Naive thymus-derived CD4-positive, alpha-beta T cell (primary cell): ENCODE measurements at regions of chr1 and their contacts with region 1.

Region 1: DNA sequence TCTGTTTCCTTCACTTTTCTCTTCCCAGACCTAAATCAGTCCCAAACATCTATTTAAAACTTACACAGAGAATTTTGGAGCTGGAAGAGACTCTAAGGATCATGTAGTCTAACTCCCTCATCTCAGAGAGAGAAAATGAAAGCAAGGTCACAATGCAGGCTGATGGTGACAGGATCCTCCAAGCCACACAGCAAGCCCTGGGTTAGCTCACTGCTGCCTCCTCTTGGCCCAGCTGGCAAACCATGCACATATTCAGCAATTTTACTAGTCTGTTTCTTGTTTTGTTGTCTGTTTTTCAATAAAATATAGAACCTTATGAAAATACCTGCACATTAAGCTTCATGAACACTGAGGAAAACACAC is 27.7 kb upstream of the LY9 start:
- DNase-seq: peak; percentile 66 to 89 (median 82)
- ATAC-seq: peak; percentile 98
- H3K4me3 ChIP-seq: peak overlapping the region; percentile 48
- H3K4me3 Mint-ChIP-seq: peak overlapping the region; percentile 61 to 94 (median 82)
- H3K27ac ChIP-seq: peak overlapping the region; percentile 56
- H3K27ac Mint-ChIP-seq: peak overlapping the region; percentile 89 to 99 (median 96)
- H3K4me1 ChIP-seq: peaks cover 16% of the 10 kb centered on the region in 2 donors
- H3K4me1 Mint-ChIP-seq: peaks cover 19 to 29% (median 21%) of the 10 kb centered on the region in 7 donors
- H3K27me3 ChIP-seq: no peaks in the 10 kb centered on the region
- H3K27me3 Mint-ChIP-seq: no peaks in the 10 kb centered on the region

Region 2: GRCh38 chr1:160097911-160098851 is 670.1 kb before region 1 on chr1 and contains the start of gene IGSF8:
- CTCF ChIA-PET with region 1: no interaction called
- POLR2A ChIA-PET with region 1: no interaction called
- intact Hi-C with region 1: no loop called
- DNase-seq: peak; percentile 84 to 92 (median 92)
- ATAC-seq: peak; percentile 82
- H3K4me3 ChIP-seq: peak within 1 kb of the TSS; percentile 87
- H3K4me3 Mint-ChIP-seq: peak within 1 kb of the TSS; percentile 86 to 96 (median 94)
- H3K27ac ChIP-seq: peak within 1 kb of the TSS; percentile 96
- H3K27ac Mint-ChIP-seq: peak within 1 kb of the TSS; percentile 88 to 99 (median 97)
- H3K4me1 ChIP-seq: peaks cover 28 to 56% of the 10 kb centered on the region in 2 donors
- H3K4me1 Mint-ChIP-seq: peaks cover 40 to 87% (median 63%) of the 10 kb centered on the region in 7 donors
- H3K27me3 ChIP-seq: no peaks in the 10 kb centered on the region
- H3K27me3 Mint-ChIP-seq: no peaks in the 10 kb centered on the region
- total RNA-seq, gene IGSF8: 31.9 to 68.7 (median 44.8) TPM

Region 3: GRCh38 chr1:160618763-160619274 is 149.5 kb before region 1 on chr1:
- CTCF ChIA-PET with region 1: interaction called, 15 read pairs
- POLR2A ChIA-PET with region 1: interaction called, 4 read pairs
- intact Hi-C with region 1: loop called (anchors 1 to 2 kb)
- DNase-seq: peak in 6 of 9 donors; percentile 34 to 49 (median 46)
- ATAC-seq: peak; percentile 83
- H3K4me3 ChIP-seq: no peak overlapping the region
- H3K4me3 Mint-ChIP-seq: peak overlapping the region in 3 of 10 donors; percentile 2 to 46 (median 24)
- H3K27ac ChIP-seq: no peak overlapping the region
- H3K27ac Mint-ChIP-seq: peak overlapping the region; percentile 21 to 83 (median 69)
- H3K4me1 ChIP-seq: peaks cover 23% of the 10 kb centered on the region in 2 donors
- H3K4me1 Mint-ChIP-seq: peaks cover 32 to 84% (median 68%) of the 10 kb centered on the region in 7 donors
- H3K27me3 ChIP-seq: no peaks in the 10 kb centered on the region
- H3K27me3 Mint-ChIP-seq: no peaks in the 10 kb centered on the region

Region 4: DNA sequence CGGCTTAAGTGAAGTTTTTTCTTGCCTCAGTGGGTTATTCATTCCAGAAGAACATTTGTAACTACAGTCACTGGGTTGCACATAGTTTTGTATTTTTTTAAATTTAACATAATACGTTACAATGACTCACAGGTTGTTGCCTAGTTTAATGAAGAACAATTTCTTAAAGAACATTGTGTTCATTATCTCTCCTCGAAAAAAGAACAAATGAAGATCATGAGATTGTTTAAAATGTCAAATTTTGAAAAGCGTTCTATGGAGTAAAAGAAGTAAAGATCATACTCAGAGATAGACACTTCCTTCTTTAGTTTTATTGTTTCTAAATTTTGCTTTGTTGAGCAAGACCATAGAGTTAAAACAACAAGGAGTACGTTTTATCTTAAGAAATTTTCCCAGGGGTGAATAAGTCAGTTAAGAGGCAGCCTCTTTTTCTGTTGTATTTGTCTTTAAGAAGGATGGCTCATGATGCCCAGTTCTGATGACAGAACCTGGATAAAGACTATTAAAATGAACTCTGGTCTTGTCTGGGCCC is 111.0 kb before region 1 on chr1:
- CTCF ChIA-PET with region 1: no interaction called
- POLR2A ChIA-PET with region 1: no interaction called
- intact Hi-C with region 1: no loop called
- DNase-seq: peak in 1 of 9 donors; percentile 29
- ATAC-seq: peak; percentile 29
- H3K4me3 ChIP-seq: no peak overlapping the region
- H3K4me3 Mint-ChIP-seq: peak overlapping the region in 9 of 10 donors; percentile 4 to 61 (median 55)
- H3K27ac ChIP-seq: peak overlapping the region; percentile 44
- H3K27ac Mint-ChIP-seq: peak overlapping the region; percentile 7 to 89 (median 83)
- H3K4me1 ChIP-seq: peaks cover under 1 to 60% of the 10 kb centered on the region in 2 donors
- H3K4me1 Mint-ChIP-seq: peaks cover 39 to 96% (median 84%) of the 10 kb centered on the region in 7 donors
- H3K27me3 ChIP-seq: no peaks in the 10 kb centered on the region
- H3K27me3 Mint-ChIP-seq: no peaks in the 10 kb centered on the region

Region 5: DNA sequence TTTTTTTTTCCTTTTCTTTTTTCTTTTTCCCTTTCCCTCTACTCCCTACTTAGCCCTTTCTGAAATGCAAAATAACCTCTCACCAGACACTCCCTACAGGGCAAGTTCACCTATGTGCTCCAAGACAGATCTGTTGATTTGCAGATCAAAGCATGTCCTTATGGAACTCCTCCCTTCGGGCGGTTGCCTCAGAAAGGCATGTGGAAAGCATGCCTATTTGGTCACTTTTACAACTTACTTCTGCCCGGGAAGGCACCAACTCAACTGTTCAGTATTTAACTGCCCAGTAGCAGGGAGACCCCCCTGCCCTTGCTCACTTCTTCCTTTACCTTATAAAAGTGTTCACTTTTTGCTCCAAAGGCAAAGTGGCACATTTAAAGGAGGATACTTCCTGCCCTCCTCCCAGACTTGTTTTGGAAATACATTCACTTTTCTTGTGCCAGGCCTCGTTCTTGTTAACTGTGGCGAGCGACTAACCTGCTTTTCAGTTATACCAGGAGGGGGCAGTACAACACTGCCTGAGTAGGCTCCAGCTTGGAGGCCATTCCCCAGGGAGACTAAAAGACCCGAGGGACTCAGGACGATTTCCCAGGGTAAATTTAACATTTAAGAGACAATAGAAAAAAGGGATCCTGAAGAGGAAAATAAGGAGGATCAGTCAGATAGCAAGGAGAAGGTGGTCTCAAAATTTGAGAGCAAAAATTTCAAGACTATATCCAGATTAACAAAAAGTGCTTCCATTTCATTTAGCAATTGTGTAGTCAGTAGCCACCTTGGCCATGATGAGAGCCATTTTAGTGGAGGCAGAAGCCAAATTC is 41.6 kb before region 1 on chr1:
- CTCF ChIA-PET with region 1: interaction called, 85 read pairs
- POLR2A ChIA-PET with region 1: interaction called, 8 read pairs
- intact Hi-C with region 1: loop called (anchors 1 kb)
- DNase-seq: peak in 8 of 9 donors; percentile 57 to 80 (median 73)
- ATAC-seq: peak; percentile 97
- H3K4me3 ChIP-seq: no peak overlapping the region
- H3K4me3 Mint-ChIP-seq: no peak overlapping the region
- H3K27ac ChIP-seq: no peak overlapping the region
- H3K27ac Mint-ChIP-seq: no peak overlapping the region
- H3K4me1 ChIP-seq: peaks cover 15 to 21% of the 10 kb centered on the region in 2 donors
- H3K4me1 Mint-ChIP-seq: peaks cover 12 to 29% (median 16%) of the 10 kb centered on the region in 7 donors
- H3K27me3 ChIP-seq: no peaks in the 10 kb centered on the region
- H3K27me3 Mint-ChIP-seq: no peaks in the 10 kb centered on the region

Region 6: GRCh38 chr1:160830321-160831153 is 62.3 kb after region 1 on chr1:
- CTCF ChIA-PET with region 1: interaction called, 26 read pairs
- POLR2A ChIA-PET with region 1: no interaction called
- intact Hi-C with region 1: no loop called
- DNase-seq: peak; percentile 51 to 77 (median 67)
- ATAC-seq: peak; percentile 75
- H3K4me3 ChIP-seq: no peak overlapping the region
- H3K4me3 Mint-ChIP-seq: no peak overlapping the region
- H3K27ac ChIP-seq: peak overlapping the region; percentile 10
- H3K27ac Mint-ChIP-seq: peak overlapping the region in 8 of 9 donors; percentile 68 to 96 (median 86)
- H3K4me1 ChIP-seq: peaks cover 6 to 18% of the 10 kb centered on the region in 2 donors
- H3K4me1 Mint-ChIP-seq: peaks cover 20 to 54% (median 36%) of the 10 kb centered on the region in 7 donors
- H3K27me3 ChIP-seq: no peaks in the 10 kb centered on the region
- H3K27me3 Mint-ChIP-seq: no peaks in the 10 kb centered on the region

Region 7: DNA sequence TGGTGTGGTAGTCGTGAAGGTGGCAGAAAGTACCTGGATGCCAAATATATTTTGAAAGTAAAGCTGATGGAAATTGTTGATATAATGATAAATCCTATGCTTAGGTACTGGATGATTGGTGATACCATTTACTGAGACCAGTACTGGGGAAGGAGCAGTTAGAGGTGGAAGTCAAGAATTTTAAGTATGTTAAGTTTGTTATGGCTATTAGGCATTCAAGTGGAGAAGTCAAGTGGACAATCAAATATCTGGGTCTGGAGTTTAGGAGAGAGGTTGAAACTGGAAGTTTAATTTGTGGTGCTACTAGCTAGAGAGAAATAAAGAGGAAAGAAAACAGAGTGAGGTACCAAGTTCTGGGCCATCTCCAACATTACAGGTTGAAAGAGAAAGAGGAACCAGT is 1087.0 kb after region 1 on chr1:
- CTCF ChIA-PET with region 1: no interaction called
- POLR2A ChIA-PET with region 1: no interaction called
- intact Hi-C with region 1: no loop called
- DNase-seq: no peak
- ATAC-seq: no peak
- H3K4me3 ChIP-seq: no peak overlapping the region
- H3K4me3 Mint-ChIP-seq: no peak overlapping the region
- H3K27ac ChIP-seq: no peak overlapping the region
- H3K27ac Mint-ChIP-seq: peak overlapping the region in 4 of 9 donors; percentile 0 to 35 (median 20)
- H3K4me1 ChIP-seq: no peaks in the 10 kb centered on the region
- H3K4me1 Mint-ChIP-seq: peaks cover 0 to 14% (median 4%) of the 10 kb centered on the region in 7 donors
- H3K27me3 ChIP-seq: no peaks in the 10 kb centered on the region
- H3K27me3 Mint-ChIP-seq: no peaks in the 10 kb centered on the region